GM18951 (cell line): ENCODE measurements at regions of chr11 and their contacts with region 1.

Region 1: GRCh38 chr11:47932544-47932943 is 47.8 kb upstream of the PTPRJ start:
- POLR2A ChIP-seq: no peak

Region 2: DNA sequence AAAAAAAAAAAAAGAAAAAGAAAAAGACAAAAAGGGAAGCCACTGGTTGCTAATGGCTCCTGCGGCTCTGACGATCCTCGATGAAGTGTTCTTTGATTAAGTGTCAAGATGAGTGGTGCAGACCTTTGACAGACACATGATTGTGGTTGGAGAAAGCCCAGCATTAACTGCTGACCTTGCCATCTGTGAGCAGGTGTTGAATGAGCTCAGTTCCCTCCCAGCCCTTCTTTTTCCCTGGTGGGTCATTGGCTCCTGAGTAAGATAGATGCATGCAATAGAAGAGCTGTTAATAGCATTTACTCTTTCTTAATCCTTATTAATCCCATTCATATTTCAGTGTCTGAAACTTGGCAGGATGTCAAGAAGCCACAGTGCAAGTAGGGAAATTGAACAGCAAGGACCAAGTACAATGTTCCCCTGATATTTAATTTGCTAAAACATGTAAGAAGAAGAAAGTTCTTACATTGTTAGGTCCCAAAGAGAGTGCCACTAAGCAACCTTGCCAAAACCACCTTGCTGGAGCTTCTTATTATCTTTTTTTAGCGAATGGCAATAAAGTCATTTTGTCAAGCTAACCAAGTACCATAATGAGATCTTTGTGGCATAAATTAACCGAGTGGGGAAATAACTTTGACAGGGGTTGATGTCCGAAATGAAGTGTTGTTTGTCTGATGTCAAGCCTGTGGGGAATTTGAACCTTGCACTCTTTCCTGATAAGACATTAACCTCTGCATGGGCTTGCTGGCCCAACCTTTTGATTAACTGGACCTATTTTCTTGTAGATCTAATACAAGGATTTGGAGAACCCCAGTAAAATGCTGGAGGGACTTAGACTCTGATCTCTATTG is 161.5 kb after region 1 on chr11:
- in situ Hi-C with region 1: no loop called
- POLR2A ChIP-seq: no peak

Region 3: GRCh38 chr11:48116437-48117228 is 184.1 kb after region 1 on chr11:
- in situ Hi-C with region 1: loop called (anchors 10 kb)
- POLR2A ChIP-seq: no peak